K562 (cell line): ENCODE measurements at regions of chr5 and their contacts with region 1.

Region 1: DNA sequence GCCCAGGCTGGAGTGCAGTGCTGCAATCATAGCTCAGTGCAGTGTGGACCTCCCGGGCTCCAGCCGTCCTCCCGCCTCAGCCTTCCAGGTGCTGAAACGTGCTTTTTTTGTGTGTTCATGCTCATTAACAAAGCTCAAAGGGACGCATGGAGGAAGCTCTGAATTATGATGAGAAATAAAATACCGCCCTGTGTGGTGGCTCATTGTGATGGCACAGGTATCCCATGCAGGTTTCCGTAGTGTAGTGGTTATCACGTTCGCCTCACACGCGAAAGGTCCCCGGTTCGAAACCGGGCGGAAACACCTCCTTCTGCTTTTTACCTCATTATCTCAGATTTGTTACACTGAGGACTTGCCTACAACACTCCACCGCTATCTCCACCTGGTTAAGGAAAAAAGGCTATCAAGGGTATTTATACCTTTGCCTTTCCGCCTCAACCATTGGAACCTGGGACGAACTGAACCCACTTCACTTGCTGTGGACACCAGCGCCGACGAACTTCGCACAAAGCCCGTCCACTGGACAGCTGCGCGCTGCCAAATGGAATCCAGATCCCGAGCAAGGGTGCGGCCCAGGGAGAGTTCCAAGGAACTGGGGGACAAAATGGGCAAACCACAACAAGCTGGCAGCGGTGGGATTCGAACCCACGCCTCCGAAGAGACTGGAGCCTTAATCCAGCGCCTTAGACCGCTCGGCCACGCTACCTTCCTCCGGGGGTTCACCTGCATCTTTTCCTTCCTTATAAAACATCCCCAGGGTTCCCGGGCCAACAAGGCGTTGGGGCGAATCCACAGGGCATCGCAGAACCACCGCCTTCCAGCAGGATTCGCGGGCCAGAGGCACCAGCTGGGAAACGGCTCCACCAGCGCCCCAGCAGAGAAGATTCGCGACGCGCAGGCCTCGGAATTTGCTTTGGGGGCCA is 26.3 kb downstream of the OR2V2 start:
- DNase-seq: peak; percentile 36 to 87 (median 44)
- ATAC-seq: peak; percentile 42
- H3K4me3 ChIP-seq: peak overlapping the region; percentile 50
- H3K27ac ChIP-seq: peak overlapping the region; percentile 75
- H3K4me1 ChIP-seq: peaks cover 21 to 43% of the 10 kb centered on the region in 2 experiments; a peak in 4 of 5 replicates
- H3K27me3 ChIP-seq: no peaks in the 10 kb centered on the region
- CTCF ChIP-seq: no peak
- EP300 ChIP-seq: no peak
- POLR2A ChIP-seq: 0 out of 2 replicates have a peak, but pooled peaks have one; percentile 43
- RAD21 ChIP-seq: no peak; a peak in 1 of 4 replicates

Region 2: DNA sequence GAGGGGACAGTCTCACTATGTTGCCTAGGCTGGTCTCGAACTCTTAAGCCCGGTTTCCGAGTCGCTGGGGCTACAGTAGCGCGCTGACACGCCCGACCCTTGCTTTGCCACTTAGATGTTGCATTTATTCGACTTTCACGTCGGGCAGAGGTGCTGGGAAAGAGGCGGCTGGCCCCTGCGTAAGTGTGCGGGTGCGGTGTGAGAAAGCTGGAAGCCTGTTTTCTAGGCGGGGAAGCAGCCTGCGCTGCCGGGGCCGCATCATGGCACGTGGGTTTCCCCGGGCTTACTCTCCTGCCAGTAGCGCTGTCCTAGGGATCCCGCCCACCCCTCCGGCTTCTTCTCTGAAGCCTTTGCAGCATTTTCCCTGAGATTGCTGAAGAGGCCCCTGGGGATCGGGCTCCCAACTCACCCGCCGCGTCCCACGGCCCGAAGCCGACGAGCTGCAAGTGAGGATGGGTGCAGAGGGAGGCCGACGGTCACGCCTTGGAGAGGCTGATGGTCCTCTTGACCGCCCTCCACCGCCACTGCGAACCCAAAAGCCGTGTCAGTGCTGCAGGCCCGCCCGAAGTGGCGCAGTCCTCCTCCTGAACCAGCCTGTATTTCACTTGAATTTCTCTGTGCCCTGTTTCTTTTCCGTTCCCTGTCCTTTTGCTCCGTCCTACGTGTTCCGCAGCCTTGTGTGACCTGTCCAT is 43.6 kb after region 1 on chr5:
- CTCF ChIA-PET with region 1: no interaction called
- POLR2A ChIA-PET with region 1: interaction called, 3 read pairs
- in situ Hi-C with region 1: no loop called
- intact Hi-C with region 1: loop called (anchors 5 kb)
- DNase-seq: peak; percentile 44 to 83 (median 50)
- ATAC-seq: peak; percentile 67
- H3K4me3 ChIP-seq: peak overlapping the region; percentile 51
- H3K27ac ChIP-seq: peak overlapping the region; percentile 87
- H3K4me1 ChIP-seq: peaks cover 4 to 32% of the 10 kb centered on the region in 2 experiments; a peak in 4 of 5 replicates
- H3K27me3 ChIP-seq: no peaks in the 10 kb centered on the region
- CTCF ChIP-seq: peak; percentile 39 to 60 (median 46); a peak in 5 of 6 replicates
- EP300 ChIP-seq: no peak
- POLR2A ChIP-seq: no peak
- RAD21 ChIP-seq: 0 out of 4 replicates have a peak, but pooled peaks of 1 of the 2 experiments have one; percentile 14